ENCODE measurements at regions of chr16 and their contacts with region 1.

Region 1: GRCh38 chr16:68528686-68529379 is 10.3 kb upstream of the ZFP90 start:
- DNase-seq: peak; percentile 92
- H3K4me3 Mint-ChIP-seq: peak overlapping the region; percentile 81
- H3K27ac Mint-ChIP-seq: peak overlapping the region; percentile 17
- H3K4me1 Mint-ChIP-seq: peaks cover 26% of the 10 kb centered on the region
- H3K27me3 Mint-ChIP-seq: peaks cover 12% of the 10 kb centered on the region

Region 2: GRCh38 chr16:68538880-68539701 is 10.3 kb after region 1 on chr16 and contains the start of gene ZFP90:
- CTCF ChIA-PET with region 1: interaction called, 11 read pairs
- DNase-seq: peak; percentile 88
- H3K4me3 Mint-ChIP-seq: peak within 1 kb of the TSS; percentile 98
- H3K27ac Mint-ChIP-seq: peak within 1 kb of the TSS; percentile 96
- H3K4me1 Mint-ChIP-seq: peaks cover 26% of the 10 kb centered on the region
- H3K27me3 Mint-ChIP-seq: no peaks in the 10 kb centered on the region

Region 3: GRCh38 chr16:68590201-68590994 is 61.6 kb after region 1 on chr16:
- CTCF ChIA-PET with region 1: interaction called, 40 read pairs
- DNase-seq: peak; percentile 72
- H3K4me3 Mint-ChIP-seq: no peak overlapping the region
- H3K27ac Mint-ChIP-seq: no peak overlapping the region
- H3K4me1 Mint-ChIP-seq: peaks cover 2% of the 10 kb centered on the region
- H3K27me3 Mint-ChIP-seq: no peaks in the 10 kb centered on the region

Region 4: GRCh38 chr16:68800257-68800875 is 271.5 kb after region 1 on chr16:
- CTCF ChIA-PET with region 1: interaction called, 16 read pairs
- DNase-seq: peak; percentile 66
- H3K4me3 Mint-ChIP-seq: no peak overlapping the region
- H3K27ac Mint-ChIP-seq: no peak overlapping the region
- H3K4me1 Mint-ChIP-seq: no peaks in the 10 kb centered on the region
- H3K27me3 Mint-ChIP-seq: no peaks in the 10 kb centered on the region